ENCODE measurements at regions of chr7 and their contacts with region 1.

Region 1: GRCh38 chr7:142811154-142811737 is 40.5 kb downstream of the PRSS2 start:
- DNase-seq: no peak
- ATAC-seq: no peak
- H3K4me3 Mint-ChIP-seq: peak overlapping the region; percentile 17
- H3K27ac Mint-ChIP-seq: peak overlapping the region; percentile 98
- H3K4me1 Mint-ChIP-seq: peaks cover 85% of the 10 kb centered on the region
- H3K27me3 Mint-ChIP-seq: no peaks in the 10 kb centered on the region
- CTCF ChIP-seq: no peak

Region 2: DNA sequence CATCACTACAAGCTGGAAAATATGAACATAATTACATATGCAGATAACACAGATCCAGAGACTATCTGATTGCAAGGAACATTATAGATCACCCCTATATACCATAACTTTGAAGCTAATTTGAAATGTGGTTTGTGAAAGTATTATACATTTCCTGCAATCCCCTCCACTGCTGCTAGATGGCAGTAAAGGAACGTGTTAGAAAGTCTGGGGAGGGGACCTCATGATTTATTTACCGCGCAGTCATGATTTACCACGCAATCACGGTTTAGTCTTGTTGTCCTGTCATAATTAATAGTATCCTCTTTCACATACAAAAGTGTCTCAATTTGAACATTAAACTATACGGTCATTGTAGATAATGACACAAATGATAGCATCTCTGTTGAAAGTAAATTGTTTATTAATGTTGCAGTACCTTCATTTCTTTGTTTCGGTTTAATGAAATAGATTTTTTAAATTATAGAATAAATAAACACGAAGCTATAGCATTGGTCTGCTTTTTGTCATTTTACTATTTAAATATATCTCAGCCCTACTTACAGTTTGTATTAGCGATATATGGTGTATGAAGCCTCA is 207.3 kb before region 1 on chr7:
- CTCF ChIA-PET with region 1: interaction called, 9 read pairs
- POLR2A ChIA-PET with region 1: interaction called, 4 read pairs
- intact Hi-C with region 1: loop called (anchors 1 kb)
- DNase-seq: no peak
- ATAC-seq: no peak
- H3K4me3 Mint-ChIP-seq: no peak overlapping the region
- H3K27ac Mint-ChIP-seq: no peak overlapping the region
- H3K4me1 Mint-ChIP-seq: peaks cover 3% of the 10 kb centered on the region
- H3K27me3 Mint-ChIP-seq: peaks cover 35% of the 10 kb centered on the region
- CTCF ChIP-seq: peak; percentile 64

Region 3: DNA sequence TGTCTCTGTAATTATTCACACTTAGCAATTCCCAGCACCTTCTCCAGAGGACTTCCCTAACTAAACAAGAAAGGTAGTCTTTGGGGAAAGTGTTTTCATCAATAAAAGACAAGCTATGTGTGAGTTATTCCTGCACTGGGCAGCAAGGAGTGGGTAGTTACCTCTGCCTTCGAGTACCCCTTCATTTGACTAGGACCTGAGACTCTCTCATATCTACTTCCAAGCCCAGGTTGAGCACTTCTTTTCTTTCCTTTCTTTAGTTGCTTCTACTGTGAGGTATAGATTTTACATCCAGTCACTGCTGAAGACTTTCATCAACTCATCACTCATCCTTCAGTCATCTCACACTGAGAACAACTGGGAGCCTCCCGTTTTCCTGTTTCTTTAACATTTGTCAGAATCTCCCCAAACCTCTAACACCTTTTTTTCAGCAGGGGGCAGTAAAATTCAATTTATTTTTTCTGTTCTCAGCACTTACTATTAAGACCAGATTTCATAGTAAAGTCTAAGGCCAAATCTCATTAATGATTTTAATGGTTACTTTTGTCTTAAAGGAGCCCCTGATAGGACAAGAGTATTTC is 142.1 kb before region 1 on chr7:
- CTCF ChIA-PET with region 1: interaction called, 10 read pairs
- POLR2A ChIA-PET with region 1: interaction called, 3 read pairs
- intact Hi-C with region 1: loop called (anchors 1 kb)
- DNase-seq: no peak
- ATAC-seq: peak; percentile 28
- H3K4me3 Mint-ChIP-seq: peak overlapping the region; percentile 13
- H3K27ac Mint-ChIP-seq: no peak overlapping the region
- H3K4me1 Mint-ChIP-seq: peaks cover 30% of the 10 kb centered on the region
- H3K27me3 Mint-ChIP-seq: no peaks in the 10 kb centered on the region
- CTCF ChIP-seq: no peak

Region 4: GRCh38 chr7:142739923-142740492 is 71.2 kb before region 1 on chr7:
- CTCF ChIA-PET with region 1: interaction called, 34 read pairs
- POLR2A ChIA-PET with region 1: interaction called, 3 read pairs
- intact Hi-C with region 1: loop called (anchors 1 kb)
- DNase-seq: no peak
- ATAC-seq: peak; percentile 96
- H3K4me3 Mint-ChIP-seq: peak overlapping the region; percentile 6
- H3K27ac Mint-ChIP-seq: peak overlapping the region; percentile 18
- H3K4me1 Mint-ChIP-seq: peaks cover 41% of the 10 kb centered on the region
- H3K27me3 Mint-ChIP-seq: no peaks in the 10 kb centered on the region
- CTCF ChIP-seq: no peak

Region 5: DNA sequence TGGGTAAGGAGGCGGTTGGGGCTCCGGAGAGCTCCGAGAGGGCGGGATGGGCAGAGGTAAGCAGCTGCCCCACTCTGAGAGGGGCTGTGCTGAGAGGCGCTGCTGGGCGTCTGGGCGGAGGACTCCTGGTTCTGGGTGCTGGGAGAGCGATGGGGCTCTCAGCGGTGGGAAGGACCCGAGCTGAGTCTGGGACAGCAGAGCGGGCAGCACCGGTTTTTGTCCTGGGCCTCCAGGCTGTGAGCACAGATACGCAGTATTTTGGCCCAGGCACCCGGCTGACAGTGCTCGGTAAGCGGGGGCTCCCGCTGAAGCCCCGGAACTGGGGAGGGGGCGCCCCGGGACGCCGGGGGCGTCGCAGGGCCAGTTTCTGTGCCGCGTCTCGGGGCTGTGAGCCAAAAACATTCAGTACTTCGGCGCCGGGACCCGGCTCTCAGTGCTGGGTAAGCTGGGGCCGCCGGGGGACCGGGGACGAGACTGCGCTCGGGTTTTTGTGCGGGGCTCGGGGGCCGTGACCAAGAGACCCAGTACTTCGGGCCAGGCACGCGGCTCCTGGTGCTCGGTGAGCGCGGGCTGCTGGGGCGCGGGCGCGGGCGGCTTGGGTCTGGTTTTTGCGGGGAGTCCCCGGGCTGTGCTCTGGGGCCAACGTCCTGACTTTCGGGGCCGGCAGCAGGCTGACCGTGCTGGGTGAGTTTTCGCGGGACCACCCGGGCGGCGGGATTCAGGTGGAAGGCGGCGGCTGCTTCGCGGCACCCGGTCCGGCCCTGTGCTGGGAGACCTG is 14.4 kb before region 1 on chr7:
- CTCF ChIA-PET with region 1: interaction called, 571 read pairs
- POLR2A ChIA-PET with region 1: interaction called, 1,916 read pairs
- intact Hi-C with region 1: loop called (anchors 1 kb)
- DNase-seq: peak; percentile 47
- ATAC-seq: peak; percentile 44
- H3K4me3 Mint-ChIP-seq: peak overlapping the region; percentile 97
- H3K27ac Mint-ChIP-seq: peak overlapping the region; percentile 99
- H3K4me1 Mint-ChIP-seq: peaks cover 83% of the 10 kb centered on the region
- H3K27me3 Mint-ChIP-seq: no peaks in the 10 kb centered on the region
- CTCF ChIP-seq: no peak

Region 6: GRCh38 chr7:142954680-142955268 is 143.5 kb after region 1 on chr7:
- CTCF ChIA-PET with region 1: no interaction called
- POLR2A ChIA-PET with region 1: no interaction called
- intact Hi-C with region 1: no loop called
- DNase-seq: no peak
- ATAC-seq: no peak
- H3K4me3 Mint-ChIP-seq: no peak overlapping the region
- H3K27ac Mint-ChIP-seq: no peak overlapping the region
- H3K4me1 Mint-ChIP-seq: peaks cover 3% of the 10 kb centered on the region
- H3K27me3 Mint-ChIP-seq: peaks cover 8% of the 10 kb centered on the region
- CTCF ChIP-seq: no peak

Region 7: GRCh38 chr7:143008007-143008901 is 197.0 kb after region 1 on chr7:
- CTCF ChIA-PET with region 1: interaction called, 10 read pairs
- POLR2A ChIA-PET with region 1: interaction called, 3 read pairs
- intact Hi-C with region 1: loop called (anchors 1 kb)
- DNase-seq: peak; percentile 81
- ATAC-seq: peak; percentile 97
- H3K4me3 Mint-ChIP-seq: no peak overlapping the region
- H3K27ac Mint-ChIP-seq: no peak overlapping the region
- H3K4me1 Mint-ChIP-seq: peaks cover 50% of the 10 kb centered on the region
- H3K27me3 Mint-ChIP-seq: peaks cover 1% of the 10 kb centered on the region
- CTCF ChIP-seq: peak; percentile 98

Region 8: DNA sequence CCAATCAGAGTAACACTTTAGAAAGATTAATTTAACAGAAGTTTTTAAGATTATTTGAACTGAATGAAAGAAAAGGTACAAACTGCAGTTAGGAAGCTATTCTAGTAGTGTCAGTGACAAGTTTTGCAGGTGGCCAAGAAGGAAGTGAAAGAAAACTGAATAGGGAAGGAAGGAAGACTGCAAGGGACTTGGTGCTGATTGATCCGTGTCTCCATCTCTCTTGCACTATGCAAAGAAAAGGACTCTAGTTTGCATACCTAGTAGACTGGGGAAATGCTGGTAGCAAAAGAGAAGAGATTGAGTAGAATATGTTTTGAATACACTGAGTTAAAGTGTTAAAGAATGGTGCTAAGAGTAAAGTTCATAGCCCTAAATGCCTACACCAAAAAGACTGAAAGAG is 273.9 kb after region 1 on chr7:
- CTCF ChIA-PET with region 1: no interaction called
- POLR2A ChIA-PET with region 1: interaction called, 3 read pairs
- intact Hi-C with region 1: loop called (anchors 1 kb)
- DNase-seq: no peak
- ATAC-seq: peak; percentile 98
- H3K4me3 Mint-ChIP-seq: peak overlapping the region; percentile 67
- H3K27ac Mint-ChIP-seq: peak overlapping the region; percentile 88
- H3K4me1 Mint-ChIP-seq: peaks cover 68% of the 10 kb centered on the region
- H3K27me3 Mint-ChIP-seq: no peaks in the 10 kb centered on the region
- CTCF ChIP-seq: no peak